Activated CD4-positive, alpha-beta memory T cell treated with anti-CD3 and anti-CD28 coated beads for 36 hours (primary cell): ENCODE measurements at regions of chr1 and their contacts with region 1.

Region 1: GRCh38 chr1:234373064-234373958 is at the start of gene COA6:
- DNase-seq: peak; percentile 92
- H3K4me3 Mint-ChIP-seq: peak within 1 kb of the TSS; percentile 97
- H3K27ac Mint-ChIP-seq: peak within 1 kb of the TSS; percentile 100
- H3K4me1 Mint-ChIP-seq: peaks cover 60% of the 10 kb centered on the region
- H3K27me3 Mint-ChIP-seq: no peaks in the 10 kb centered on the region
- total RNA-seq, gene COA6: 57.7 to 58.5 TPM

Region 2: DNA sequence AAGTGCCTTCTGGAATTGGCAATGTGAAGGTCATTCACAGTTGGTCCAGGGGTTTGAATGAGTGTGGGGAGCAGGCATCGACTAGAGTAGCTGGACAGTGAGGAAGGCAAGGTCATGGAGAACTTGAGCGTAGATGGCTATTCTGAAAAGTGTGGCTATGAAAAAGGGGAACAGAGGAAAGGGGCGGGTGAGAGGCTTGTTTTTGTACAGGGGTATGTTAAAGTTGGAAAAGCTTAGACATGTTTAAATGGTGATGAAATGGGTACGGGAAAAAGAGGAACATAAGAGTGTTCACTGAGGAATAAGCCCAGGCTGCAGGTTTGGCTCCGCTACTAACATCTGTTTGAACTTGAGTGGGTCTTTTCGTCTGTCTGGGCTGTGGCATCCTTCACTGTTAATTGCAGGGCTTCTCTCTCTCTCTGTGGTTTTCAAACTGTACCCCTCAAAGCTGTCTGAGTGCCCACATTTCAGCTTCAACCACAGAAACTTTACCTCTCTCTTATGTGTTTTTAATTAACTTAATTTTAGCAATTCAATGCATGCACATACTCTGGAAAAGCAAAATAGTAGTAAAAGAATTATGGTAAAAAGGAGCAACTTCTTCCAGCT is 70.9 kb before region 1 on chr1:
- CTCF ChIA-PET with region 1: no interaction called
- POLR2A ChIA-PET with region 1: no interaction called
- intact Hi-C with region 1: no loop called
- DNase-seq: no peak
- H3K4me3 Mint-ChIP-seq: no peak overlapping the region
- H3K27ac Mint-ChIP-seq: no peak overlapping the region
- H3K4me1 Mint-ChIP-seq: no peaks in the 10 kb centered on the region
- H3K27me3 Mint-ChIP-seq: peaks cover 7% of the 10 kb centered on the region

Region 3: DNA sequence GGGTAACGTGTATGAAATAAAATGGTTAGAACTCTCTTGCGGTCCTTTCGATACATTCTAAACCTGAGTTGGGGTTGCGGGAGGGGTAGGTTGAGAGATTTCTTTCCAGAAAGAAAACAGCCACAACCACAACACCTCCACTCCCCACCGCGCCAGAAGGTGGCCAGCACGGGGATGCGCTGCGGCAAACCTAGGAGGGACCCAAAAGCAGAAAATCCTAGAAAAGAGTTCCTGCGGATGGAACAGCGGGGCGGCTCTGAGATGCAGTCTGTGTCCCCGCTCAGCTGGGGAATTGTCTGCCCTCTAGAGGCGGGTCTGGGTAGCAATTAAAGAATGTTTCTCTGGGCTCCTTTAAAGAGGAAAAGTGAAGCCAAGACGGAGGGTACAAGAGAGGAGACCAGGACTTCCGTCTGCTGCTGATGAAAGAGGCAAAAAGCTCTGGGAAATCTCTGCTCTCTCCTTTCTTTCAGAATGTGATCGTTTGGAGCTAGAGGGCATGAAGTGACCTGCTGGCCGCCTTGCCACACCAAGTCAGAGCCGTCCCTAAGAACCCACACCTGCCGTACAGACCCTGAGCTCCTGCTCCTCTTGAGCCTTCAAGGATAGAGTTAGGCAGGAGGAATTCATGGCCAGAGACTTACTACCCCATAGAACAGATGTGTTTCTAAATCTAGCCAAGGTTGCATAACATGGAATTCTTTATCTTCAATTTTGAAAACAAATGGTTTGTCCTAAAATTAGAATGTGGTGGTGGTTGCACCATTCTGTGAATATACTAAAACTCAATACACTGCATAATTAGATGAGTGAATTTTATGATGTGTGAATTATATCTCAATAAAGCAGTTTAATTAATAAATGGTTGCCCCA is 46.6 kb before region 1 on chr1:
- CTCF ChIA-PET with region 1: interaction called, 12 read pairs
- POLR2A ChIA-PET with region 1: no interaction called
- intact Hi-C with region 1: loop called (anchors 2 kb)
- DNase-seq: peak; percentile 75
- H3K4me3 Mint-ChIP-seq: peak overlapping the region; percentile 72
- H3K27ac Mint-ChIP-seq: no peak overlapping the region
- H3K4me1 Mint-ChIP-seq: peaks cover 16% of the 10 kb centered on the region
- H3K27me3 Mint-ChIP-seq: peaks cover 13% of the 10 kb centered on the region

Region 4: GRCh38 chr1:234398849-234399381 is 25.6 kb after region 1 on chr1:
- CTCF ChIA-PET with region 1: interaction called, 6 read pairs
- POLR2A ChIA-PET with region 1: interaction called, 12 read pairs
- intact Hi-C with region 1: loop called (anchors 1 kb)
- DNase-seq: no peak
- H3K4me3 Mint-ChIP-seq: peak overlapping the region; percentile 66
- H3K27ac Mint-ChIP-seq: peak overlapping the region; percentile 92
- H3K4me1 Mint-ChIP-seq: peaks cover 53% of the 10 kb centered on the region
- H3K27me3 Mint-ChIP-seq: no peaks in the 10 kb centered on the region

Region 5: GRCh38 chr1:234478481-234479309 is 105.4 kb after region 1 on chr1 and contains the start of gene TARBP1:
- CTCF ChIA-PET with region 1: interaction called, 3 read pairs
- POLR2A ChIA-PET with region 1: interaction called, 7 read pairs
- intact Hi-C with region 1: loop called (anchors 2 kb)
- DNase-seq: peak; percentile 82
- H3K4me3 Mint-ChIP-seq: peak within 1 kb of the TSS; percentile 80
- H3K27ac Mint-ChIP-seq: peak within 1 kb of the TSS; percentile 65
- H3K4me1 Mint-ChIP-seq: peaks cover 39% of the 10 kb centered on the region
- H3K27me3 Mint-ChIP-seq: peaks cover 14% of the 10 kb centered on the region
- total RNA-seq, gene TARBP1: 28.9 to 30.1 TPM